PC-3 (cell line): ENCODE measurements at regions of chr18 and their contacts with region 1.

Region 1: DNA sequence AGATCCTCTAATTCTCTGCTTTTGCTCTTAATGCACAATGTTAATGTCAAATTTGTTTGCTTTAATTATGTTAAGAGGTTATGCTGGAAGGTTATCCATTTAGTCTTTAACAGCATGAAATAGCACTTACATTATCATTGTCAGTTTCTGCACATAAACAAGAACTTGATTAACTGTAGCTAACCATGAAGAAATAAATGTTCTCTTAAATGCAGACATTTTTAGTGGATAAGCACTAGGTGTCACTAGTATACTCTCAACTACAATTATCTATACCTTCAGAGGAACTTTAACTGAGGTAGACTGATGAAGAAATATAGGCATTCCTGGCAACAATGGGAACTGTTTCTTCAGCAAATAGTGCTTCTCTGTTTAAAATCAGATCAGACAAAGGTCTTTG is 178.8 kb upstream of the CHST9 start:
- DNase-seq: peak; percentile 34
- ATAC-seq: 0 out of 2 replicates have a peak, but pooled peaks have one; percentile 49
- H3K4me3 ChIP-seq: no peak overlapping the region
- H3K27ac ChIP-seq: no peak overlapping the region
- H3K4me1 ChIP-seq: no peaks in the 10 kb centered on the region
- H3K27me3 ChIP-seq: peaks cover 47% of the 10 kb centered on the region
- CTCF ChIP-seq: peak; percentile 58

Region 2: DNA sequence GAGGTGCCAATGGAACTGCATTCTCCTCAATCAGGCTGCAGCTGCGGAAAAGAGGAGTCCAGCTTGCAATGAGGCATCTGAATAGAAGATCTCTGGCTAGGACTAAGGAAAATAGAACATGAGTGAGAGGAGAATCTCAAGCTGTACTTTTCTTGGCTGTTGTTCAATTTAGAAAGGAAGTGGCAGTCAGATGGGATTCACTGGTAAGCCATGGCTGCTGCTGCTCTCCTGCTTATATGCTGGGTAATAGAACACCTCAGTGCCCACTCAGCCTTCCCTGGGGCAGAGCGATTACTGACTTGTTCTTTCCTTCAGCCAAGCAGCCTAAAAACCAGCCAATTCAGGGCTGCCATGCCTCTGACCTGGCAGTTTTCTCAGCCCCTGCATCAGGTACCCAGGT is 161.1 kb before region 1 on chr18:
- CTCF ChIA-PET with region 1: no interaction called
- POLR2A ChIA-PET with region 1: no interaction called
- intact Hi-C with region 1: no loop called
- DNase-seq: no peak
- ATAC-seq: no peak
- H3K4me3 ChIP-seq: no peak overlapping the region
- H3K27ac ChIP-seq: no peak overlapping the region
- H3K4me1 ChIP-seq: no peaks in the 10 kb centered on the region
- H3K27me3 ChIP-seq: peaks cover 24% of the 10 kb centered on the region
- CTCF ChIP-seq: no peak

Region 3: DNA sequence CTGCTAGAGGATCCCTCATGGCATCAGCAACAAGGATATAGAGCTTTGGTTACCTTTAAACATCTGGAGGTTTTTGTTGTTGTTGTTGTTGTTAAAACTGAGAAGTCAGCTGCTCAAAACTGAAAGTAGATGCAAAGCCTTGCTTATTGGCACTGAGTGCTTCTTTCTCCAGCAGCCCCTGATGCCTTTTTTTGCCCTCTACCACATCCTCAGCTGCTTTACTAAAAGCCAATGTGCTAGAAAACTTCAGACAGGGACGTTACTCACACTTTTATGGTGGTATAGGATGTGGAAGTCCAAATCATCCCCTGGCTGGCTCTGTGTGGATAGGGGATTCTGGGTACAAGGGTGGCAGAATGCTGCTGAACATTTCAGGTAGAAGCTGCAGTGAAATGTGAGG is 100.5 kb before region 1 on chr18:
- CTCF ChIA-PET with region 1: no interaction called
- POLR2A ChIA-PET with region 1: no interaction called
- intact Hi-C with region 1: no loop called
- DNase-seq: no peak
- ATAC-seq: no peak
- H3K4me3 ChIP-seq: no peak overlapping the region
- H3K27ac ChIP-seq: no peak overlapping the region
- H3K4me1 ChIP-seq: no peaks in the 10 kb centered on the region
- H3K27me3 ChIP-seq: peaks cover 8% of the 10 kb centered on the region; the same call in 1 of the 2 replicates
- CTCF ChIP-seq: no peak

Region 4: GRCh38 chr18:27428120-27428519 is 64.2 kb after region 1 on chr18:
- CTCF ChIA-PET with region 1: interaction called, 6 read pairs
- POLR2A ChIA-PET with region 1: no interaction called
- intact Hi-C with region 1: loop called (anchors 5 kb)
- DNase-seq: peak; percentile 46
- ATAC-seq: no peak; the same call in 1 of the 2 replicates
- H3K4me3 ChIP-seq: no peak overlapping the region
- H3K27ac ChIP-seq: no peak overlapping the region
- H3K4me1 ChIP-seq: no peaks in the 10 kb centered on the region
- H3K27me3 ChIP-seq: peaks cover 30% of the 10 kb centered on the region
- CTCF ChIP-seq: peak; percentile 62

Region 5: DNA sequence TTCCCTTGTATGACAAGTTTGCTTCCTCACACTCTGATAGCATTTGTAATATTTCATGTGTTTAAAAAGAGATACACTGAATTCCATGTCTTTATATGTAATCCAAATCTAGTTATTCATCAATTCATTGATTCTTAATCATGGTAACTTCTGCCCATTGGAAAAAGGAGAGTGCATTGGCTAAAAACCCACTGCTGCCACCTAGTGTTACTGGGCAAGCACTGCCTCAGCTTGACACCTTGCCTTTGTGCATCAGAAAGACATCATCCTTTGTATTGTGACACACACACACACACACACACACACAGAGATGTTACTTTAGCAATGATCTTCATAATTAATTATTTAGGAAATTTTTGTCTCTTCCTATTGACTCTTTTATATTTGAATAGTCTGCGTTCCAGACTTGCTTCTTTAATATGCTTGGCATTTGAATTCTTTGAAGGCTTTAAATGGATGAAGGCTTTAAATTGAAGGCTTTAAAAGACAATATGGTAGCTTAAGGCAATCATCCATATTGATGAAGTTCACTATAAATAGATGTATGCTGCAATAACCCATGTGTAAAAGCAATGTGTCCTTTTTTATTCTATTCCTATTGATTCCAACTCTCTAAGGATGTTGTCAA is 235.4 kb after region 1 on chr18:
- CTCF ChIA-PET with region 1: no interaction called
- POLR2A ChIA-PET with region 1: no interaction called
- intact Hi-C with region 1: loop called (anchors 1 kb)
- DNase-seq: peak; percentile 68
- ATAC-seq: peak; percentile 59
- H3K4me3 ChIP-seq: no peak overlapping the region
- H3K27ac ChIP-seq: no peak overlapping the region
- H3K4me1 ChIP-seq: peaks cover 2% of the 10 kb centered on the region
- H3K27me3 ChIP-seq: peaks cover 16% of the 10 kb centered on the region
- CTCF ChIP-seq: peak; percentile 92